G401 (cell line): ENCODE measurements at regions of chr11 and their contacts with region 1.

Region 1: GRCh38 chr11:2077061-2077802 is 62.0 kb downstream of the IGF2 start:
- DNase-seq: no peak

Region 2: DNA sequence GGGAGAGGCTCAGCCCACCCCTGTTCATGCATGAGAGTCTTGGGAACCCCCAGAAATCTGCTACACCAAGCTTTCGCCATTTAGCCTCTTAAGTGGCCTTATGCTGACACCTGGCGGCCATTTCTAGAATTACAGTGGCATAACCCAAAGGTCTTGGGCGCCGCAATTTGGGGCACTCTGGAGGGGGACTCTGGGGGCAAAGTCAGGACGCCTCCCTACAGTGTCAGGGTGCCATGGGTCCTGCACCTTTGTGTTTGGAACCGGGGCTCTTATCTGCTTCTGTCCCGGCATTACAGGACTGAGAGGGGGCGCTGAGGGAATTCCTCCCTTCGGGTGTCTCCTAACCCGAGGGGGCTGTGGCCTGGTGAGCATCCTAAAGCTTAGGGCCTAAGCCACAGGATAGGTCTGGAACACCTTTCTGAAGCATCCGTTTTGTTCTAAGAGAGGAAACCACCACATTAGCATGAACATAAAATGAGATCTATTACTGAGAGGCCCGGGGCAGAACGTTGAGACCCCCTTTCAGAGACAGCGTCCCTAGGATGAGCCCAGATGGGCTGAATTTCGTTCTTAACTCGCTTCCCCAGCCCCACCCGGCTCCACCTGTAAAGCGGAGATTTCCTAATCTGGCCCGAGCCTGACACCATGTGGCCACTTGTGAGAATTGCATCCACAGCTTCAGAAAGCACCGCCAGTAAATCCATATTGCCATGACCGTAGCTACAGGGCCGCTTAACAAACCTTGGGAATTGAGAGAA is 74.4 kb after region 1 on chr11:
- in situ Hi-C with region 1: loop called (anchors 5 kb)
- DNase-seq: peak; percentile 84